Transverse colon (tissue), 4 donors: ENCODE measurements at regions of chr5 and their contacts with region 1.

Region 1: DNA sequence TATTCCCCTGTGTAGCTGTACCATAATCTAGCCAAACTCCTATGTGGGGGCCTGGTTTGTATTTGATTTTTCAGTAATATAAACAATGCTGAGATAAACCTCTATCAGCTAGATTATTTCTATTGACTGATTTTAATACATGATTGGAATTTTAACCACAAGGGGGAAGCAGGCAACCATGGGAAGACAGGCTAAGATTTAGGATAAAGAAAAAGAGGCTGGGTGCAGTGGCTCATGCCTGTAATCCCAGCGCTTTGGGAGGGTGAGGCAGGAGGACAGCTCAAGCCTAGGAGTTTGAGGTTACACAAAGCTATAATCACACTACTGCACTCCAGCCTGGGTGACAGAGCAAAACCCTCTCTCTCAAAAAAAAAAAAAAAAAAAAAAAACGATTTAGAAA is 18.1 kb upstream of the GPX3 start:
- DNase-seq: no peak
- H3K4me3 ChIP-seq: no peak overlapping the region
- H3K27ac ChIP-seq: no peak overlapping the region
- H3K4me1 ChIP-seq: peaks cover 19 to 35% (median 30%) of the 10 kb centered on the region in 4 donors
- H3K27me3 ChIP-seq: no peaks in the 10 kb centered on the region
- CTCF ChIP-seq: peak; percentile 36 to 60 (median 48)
- EP300 ChIP-seq: no peak
- POLR2A ChIP-seq: no peak

Region 2: GRCh38 chr5:150486402-150487198 is 515.6 kb before region 1 on chr5:
- in situ Hi-C with region 1: no loop called
- intact Hi-C with region 1: loop called (anchors 5 kb)
- DNase-seq: peak; percentile 57
- H3K4me3 ChIP-seq: peak overlapping the region; percentile 62 to 94 (median 90)
- H3K27ac ChIP-seq: peak overlapping the region; percentile 90 to 95 (median 94)
- H3K4me1 ChIP-seq: peaks cover 38 to 56% (median 48%) of the 10 kb centered on the region in 4 donors
- H3K27me3 ChIP-seq: no peaks in the 10 kb centered on the region
- CTCF ChIP-seq: peak in 1 of 5 experiments; percentile 4
- EP300 ChIP-seq: no peak
- POLR2A ChIP-seq: no peak

Region 3: GRCh38 chr5:150511578-150512367 is 490.5 kb before region 1 on chr5:
- in situ Hi-C with region 1: no loop called
- intact Hi-C with region 1: no loop called
- DNase-seq: peak; percentile 93
- H3K4me3 ChIP-seq: no peak overlapping the region
- H3K27ac ChIP-seq: peak overlapping the region; percentile 84 to 92 (median 84)
- H3K4me1 ChIP-seq: peaks cover 59 to 87% (median 80%) of the 10 kb centered on the region in 4 donors
- H3K27me3 ChIP-seq: no peaks in the 10 kb centered on the region
- CTCF ChIP-seq: no peak
- EP300 ChIP-seq: no peak
- POLR2A ChIP-seq: peak; percentile 34

Region 4: GRCh38 chr5:151051066-151051930 is 49.0 kb after region 1 on chr5:
- in situ Hi-C with region 1: no loop called
- intact Hi-C with region 1: loop called (anchors 5 kb)
- DNase-seq: peak; percentile 89
- H3K4me3 ChIP-seq: no peak overlapping the region
- H3K27ac ChIP-seq: peak overlapping the region; percentile 15 to 82 (median 43)
- H3K4me1 ChIP-seq: peaks cover 5 to 34% (median 13%) of the 10 kb centered on the region in 4 donors
- H3K27me3 ChIP-seq: no peaks in the 10 kb centered on the region
- CTCF ChIP-seq: peak; percentile 85 to 95 (median 86)
- EP300 ChIP-seq: no peak
- POLR2A ChIP-seq: no peak

Region 5: DNA sequence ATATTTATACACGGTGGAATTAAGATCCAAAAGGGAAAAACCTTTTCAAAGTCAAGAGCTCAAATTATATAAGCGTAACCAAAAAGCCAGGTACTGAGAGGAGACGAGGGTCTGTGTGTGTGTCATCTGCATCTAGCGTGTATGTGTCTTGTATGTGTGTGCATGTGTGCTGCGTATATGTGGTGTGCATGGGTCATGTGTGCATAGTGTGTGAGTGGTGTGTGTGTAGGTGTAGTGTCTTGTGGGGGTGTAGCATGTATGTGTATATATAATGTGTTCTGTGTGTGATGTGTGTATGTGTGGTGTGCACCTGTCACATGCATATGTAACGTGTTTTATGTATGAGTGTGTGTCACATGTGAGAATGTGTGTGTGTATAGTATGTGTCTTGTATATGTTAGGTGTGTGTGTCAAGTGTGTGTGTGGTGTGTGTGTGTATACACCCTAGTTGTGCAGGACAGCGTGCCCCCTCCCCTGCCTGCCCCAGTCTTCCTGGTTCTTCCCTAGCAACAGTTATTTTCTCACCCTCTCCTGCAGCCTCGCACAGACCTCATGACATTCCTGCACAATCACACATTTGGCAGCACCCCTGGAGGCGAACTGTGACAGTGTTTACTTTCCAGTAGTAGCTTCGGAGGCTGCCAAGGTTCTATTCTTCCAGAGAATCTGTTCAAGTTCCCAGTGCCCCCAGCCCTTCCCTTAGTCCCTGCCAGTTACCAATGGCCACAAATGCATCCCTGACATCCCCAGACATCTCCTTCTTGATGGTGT is 105.7 kb after region 1 on chr5:
- in situ Hi-C with region 1: no loop called
- intact Hi-C with region 1: loop called (anchors 5 kb)
- DNase-seq: peak; percentile 67
- H3K4me3 ChIP-seq: no peak overlapping the region
- H3K27ac ChIP-seq: peak overlapping the region; percentile 79 to 89 (median 82)
- H3K4me1 ChIP-seq: peaks cover 31 to 68% (median 38%) of the 10 kb centered on the region in 4 donors
- H3K27me3 ChIP-seq: no peaks in the 10 kb centered on the region
- CTCF ChIP-seq: peak in 2 of 5 experiments; percentile 36 to 52
- EP300 ChIP-seq: peak; percentile 70
- POLR2A ChIP-seq: no peak

Region 6: DNA sequence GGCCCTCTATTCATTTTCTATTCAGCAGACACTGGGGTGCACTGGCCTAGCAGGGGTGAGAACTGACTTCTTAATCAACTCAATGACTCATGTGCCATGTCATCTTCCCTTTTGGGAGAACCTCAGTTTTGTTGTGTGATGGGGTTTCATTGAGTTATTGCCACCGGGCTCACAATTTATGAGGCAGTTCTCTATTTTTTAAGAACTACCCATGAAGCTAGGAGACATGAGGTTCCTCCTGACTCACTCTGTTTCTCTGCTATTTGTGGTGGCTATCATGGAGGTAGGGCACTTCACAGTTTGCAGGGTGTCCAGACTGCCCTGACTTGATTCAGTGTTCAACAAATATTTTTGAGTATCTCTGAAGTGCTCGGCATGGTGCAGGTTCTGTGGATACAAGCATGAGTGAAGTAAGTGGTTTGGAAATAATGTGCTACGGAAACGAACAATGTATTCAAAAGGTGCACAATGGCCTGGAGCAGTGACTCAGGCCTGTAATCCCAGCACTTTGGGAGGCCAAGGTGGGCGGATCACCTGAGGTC is 645.1 kb after region 1 on chr5:
- in situ Hi-C with region 1: no loop called
- intact Hi-C with region 1: no loop called
- DNase-seq: no peak
- H3K4me3 ChIP-seq: no peak overlapping the region
- H3K27ac ChIP-seq: no peak overlapping the region
- H3K4me1 ChIP-seq: no peaks in the 10 kb centered on the region
- H3K27me3 ChIP-seq: no peaks in the 10 kb centered on the region
- CTCF ChIP-seq: no peak
- EP300 ChIP-seq: no peak
- POLR2A ChIP-seq: no peak